ENCODE measurements at regions of chr1 and their contacts with region 1.

Region 1: GRCh38 chr1:197692965-197693364 is 82.3 kb downstream of the DENND1B start:
- DNase-seq: peak; percentile 19
- H3K4me3 ChIP-seq: no peak overlapping the region
- H3K27ac ChIP-seq: no peak overlapping the region
- H3K4me1 ChIP-seq: peaks cover 8% of the 10 kb centered on the region
- CTCF ChIP-seq: peak; percentile 73

Region 2: DNA sequence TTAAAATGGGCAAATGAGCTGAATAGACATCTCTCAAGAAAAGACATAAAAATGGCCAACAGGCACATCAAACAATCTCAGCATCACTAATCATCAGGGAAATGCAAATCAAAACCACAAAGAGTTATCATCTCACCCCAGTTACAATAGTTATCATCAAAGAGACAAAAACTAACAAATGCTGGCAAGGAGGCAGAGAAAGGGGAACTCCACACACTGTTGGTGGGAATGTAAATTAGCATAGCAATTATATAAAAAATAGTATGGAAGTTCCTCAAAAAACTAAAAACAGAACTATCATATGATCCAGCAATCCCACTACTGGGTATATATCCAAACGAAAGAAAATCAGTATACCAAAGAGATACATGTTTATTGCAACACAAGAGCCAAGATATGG is 13.6 kb after region 1 on chr1:
- CTCF ChIA-PET with region 1: no interaction called
- POLR2A ChIA-PET with region 1: interaction called, 16 read pairs
- intact Hi-C with region 1: no loop called
- DNase-seq: no peak
- H3K4me3 ChIP-seq: no peak overlapping the region
- H3K27ac ChIP-seq: no peak overlapping the region
- H3K4me1 ChIP-seq: no peaks in the 10 kb centered on the region
- CTCF ChIP-seq: no peak

Region 3: GRCh38 chr1:197911111-197911856 is 218.3 kb after region 1 on chr1:
- CTCF ChIA-PET with region 1: no interaction called
- POLR2A ChIA-PET with region 1: no interaction called
- intact Hi-C with region 1: no loop called
- DNase-seq: no peak
- H3K4me3 ChIP-seq: no peak overlapping the region
- H3K27ac ChIP-seq: no peak overlapping the region
- H3K4me1 ChIP-seq: no peaks in the 10 kb centered on the region
- CTCF ChIP-seq: no peak